Activated CD8-positive, alpha-beta memory T cell treated with anti-CD3 and anti-CD28 coated beads, Interleukin-2, amount 10 ng/mL, durations not matched to agents 7 days and 5 days (primary cell): ENCODE measurements at regions of chr3 and their contacts with region 1.

Region 1: GRCh38 chr3:48739955-48740823 is 23.2 kb upstream of the IP6K2 start:
- DNase-seq: peak; percentile 70
- ATAC-seq: peak; percentile 97
- H3K4me3 Mint-ChIP-seq: no peak overlapping the region
- H3K27ac Mint-ChIP-seq: no peak overlapping the region
- H3K4me1 Mint-ChIP-seq: peaks cover 2% of the 10 kb centered on the region
- H3K27me3 Mint-ChIP-seq: no peaks in the 10 kb centered on the region

Region 2: DNA sequence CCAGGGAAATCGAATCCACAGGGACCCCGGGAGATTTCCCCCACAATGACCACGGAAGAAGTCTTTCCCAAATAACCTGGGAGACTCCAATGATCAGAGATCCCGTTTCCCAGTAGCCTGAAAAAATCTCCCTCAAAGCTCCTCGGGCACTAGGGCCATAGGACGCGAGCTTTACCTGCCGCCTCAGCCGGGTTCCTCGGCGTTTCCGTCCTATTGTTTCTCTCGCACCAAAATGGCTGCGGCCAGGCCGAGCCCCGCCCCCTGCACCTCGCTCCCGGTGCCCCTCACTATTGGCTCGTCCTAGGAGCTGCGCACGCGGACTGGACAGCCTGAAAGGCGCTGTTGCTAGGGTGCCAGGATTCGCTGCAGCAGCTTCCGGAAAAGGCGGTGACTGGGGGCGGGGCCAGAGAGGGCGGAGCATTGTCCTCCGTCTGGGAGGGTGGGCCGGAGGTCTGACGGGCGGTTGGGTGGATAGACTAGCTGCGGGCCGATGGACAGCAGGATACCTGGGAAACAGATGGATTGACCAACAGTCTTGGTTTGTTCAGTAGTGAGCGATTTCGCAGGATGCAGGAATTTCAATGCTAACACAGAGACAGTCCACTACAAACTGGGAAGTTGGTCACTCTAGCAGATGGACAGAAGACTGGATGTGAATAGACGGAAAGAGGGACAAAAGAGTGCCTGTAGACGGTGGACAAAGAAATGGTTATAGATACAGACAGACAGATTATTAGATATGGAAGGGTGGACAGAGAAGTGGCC is 23.0 kb before region 1 on chr3 and contains the start of gene IP6K2:
- CTCF ChIA-PET with region 1: interaction called, 11 read pairs
- DNase-seq: peak; percentile 99
- ATAC-seq: peak; percentile 99
- H3K4me3 Mint-ChIP-seq: peak within 1 kb of the TSS; percentile 94
- H3K27ac Mint-ChIP-seq: peak within 1 kb of the TSS; percentile 98
- H3K4me1 Mint-ChIP-seq: peaks cover 30% of the 10 kb centered on the region
- H3K27me3 Mint-ChIP-seq: no peaks in the 10 kb centered on the region
- total RNA-seq, gene IP6K2: 65.3 to 69.7 TPM

Region 3: DNA sequence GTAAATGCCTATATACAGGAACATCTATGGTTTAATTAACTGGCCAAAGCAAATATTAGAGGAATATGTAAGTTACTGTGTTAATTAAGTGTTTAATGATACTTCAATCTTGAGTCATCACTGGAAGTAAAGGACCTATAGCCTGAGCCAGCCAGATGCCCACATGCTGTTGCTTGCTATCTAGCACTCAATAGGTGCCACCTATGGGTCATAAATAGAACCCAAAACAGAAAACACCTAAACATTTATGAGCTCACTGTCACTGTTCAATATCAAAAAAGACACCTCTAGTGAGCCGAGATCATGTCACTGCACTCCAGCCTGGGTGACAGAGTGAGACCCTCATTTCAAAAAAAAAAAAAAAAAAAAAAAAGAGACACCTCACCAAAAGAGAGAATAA is 25.2 kb after region 1 on chr3:
- CTCF ChIA-PET with region 1: interaction called, 10 read pairs
- DNase-seq: no peak
- ATAC-seq: no peak
- H3K4me3 Mint-ChIP-seq: no peak overlapping the region
- H3K27ac Mint-ChIP-seq: no peak overlapping the region
- H3K4me1 Mint-ChIP-seq: no peaks in the 10 kb centered on the region
- H3K27me3 Mint-ChIP-seq: no peaks in the 10 kb centered on the region

Region 4: DNA sequence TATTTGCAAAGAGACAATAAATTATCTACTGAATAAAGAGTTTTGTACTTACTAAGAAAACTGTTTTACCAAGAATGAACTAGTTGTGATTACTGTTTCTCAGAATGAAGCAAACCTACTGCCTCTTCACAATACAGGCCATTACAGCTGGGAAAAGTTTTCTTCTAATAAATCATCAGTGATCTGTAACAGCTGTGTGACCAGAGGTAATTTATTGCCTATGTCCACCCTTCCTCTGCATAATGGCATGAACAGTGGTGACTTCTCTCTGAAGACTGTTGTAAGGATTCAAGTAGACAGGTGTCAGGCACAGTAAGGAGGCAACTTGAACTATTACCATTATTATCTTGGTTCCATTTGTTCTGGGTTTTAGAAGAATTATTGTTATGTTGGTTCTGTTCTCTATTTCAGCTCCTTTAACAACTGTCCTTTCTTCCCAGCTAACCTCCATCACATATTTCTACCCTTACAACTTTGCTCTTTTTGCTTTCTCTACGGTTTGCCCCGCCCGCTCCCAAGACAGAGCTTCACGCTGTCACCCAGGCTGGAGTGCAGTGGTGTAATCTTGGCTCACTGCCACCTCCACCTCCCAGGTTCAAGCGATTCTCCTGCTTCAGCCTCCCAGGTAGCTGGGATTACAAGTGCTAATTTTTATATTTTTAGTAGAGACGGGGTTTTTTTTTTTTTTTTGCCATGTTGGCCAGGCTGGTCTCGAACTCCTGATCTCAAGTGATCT is 56.0 kb after region 1 on chr3:
- CTCF ChIA-PET with region 1: no interaction called
- DNase-seq: no peak
- ATAC-seq: no peak
- H3K4me3 Mint-ChIP-seq: no peak overlapping the region
- H3K27ac Mint-ChIP-seq: no peak overlapping the region
- H3K4me1 Mint-ChIP-seq: no peaks in the 10 kb centered on the region
- H3K27me3 Mint-ChIP-seq: no peaks in the 10 kb centered on the region

Region 5: DNA sequence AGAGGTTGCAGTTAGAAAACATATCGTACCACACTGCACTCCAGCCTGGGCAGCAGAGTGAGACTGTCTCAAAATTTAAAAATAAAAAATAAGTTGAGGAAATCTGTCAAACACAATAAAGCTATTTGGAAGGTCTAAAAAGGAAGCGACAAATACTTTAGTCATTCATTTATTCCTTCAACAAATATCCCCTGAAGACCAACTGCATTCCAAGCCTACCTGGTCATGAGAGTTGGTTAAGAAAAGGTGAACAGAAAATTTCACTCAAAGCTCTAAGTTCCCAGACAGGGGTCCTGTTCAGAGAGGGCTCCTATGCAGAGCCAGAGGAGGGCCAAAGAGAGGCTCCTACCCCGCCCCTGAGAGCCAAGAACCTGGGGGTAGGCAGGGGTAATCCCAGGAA is 122.9 kb after region 1 on chr3:
- CTCF ChIA-PET with region 1: no interaction called
- DNase-seq: no peak
- ATAC-seq: no peak
- H3K4me3 Mint-ChIP-seq: no peak overlapping the region
- H3K27ac Mint-ChIP-seq: no peak overlapping the region
- H3K4me1 Mint-ChIP-seq: peaks cover 4% of the 10 kb centered on the region
- H3K27me3 Mint-ChIP-seq: no peaks in the 10 kb centered on the region

Region 6: GRCh38 chr3:48879307-48879993 is 139.3 kb after region 1 on chr3:
- CTCF ChIA-PET with region 1: no interaction called
- DNase-seq: no peak
- ATAC-seq: no peak
- H3K4me3 Mint-ChIP-seq: no peak overlapping the region
- H3K27ac Mint-ChIP-seq: no peak overlapping the region
- H3K4me1 Mint-ChIP-seq: no peaks in the 10 kb centered on the region
- H3K27me3 Mint-ChIP-seq: no peaks in the 10 kb centered on the region